Stomach (tissue), 19 donors: ENCODE measurements at regions of chr5 and their contacts with region 1.

Region 1: DNA sequence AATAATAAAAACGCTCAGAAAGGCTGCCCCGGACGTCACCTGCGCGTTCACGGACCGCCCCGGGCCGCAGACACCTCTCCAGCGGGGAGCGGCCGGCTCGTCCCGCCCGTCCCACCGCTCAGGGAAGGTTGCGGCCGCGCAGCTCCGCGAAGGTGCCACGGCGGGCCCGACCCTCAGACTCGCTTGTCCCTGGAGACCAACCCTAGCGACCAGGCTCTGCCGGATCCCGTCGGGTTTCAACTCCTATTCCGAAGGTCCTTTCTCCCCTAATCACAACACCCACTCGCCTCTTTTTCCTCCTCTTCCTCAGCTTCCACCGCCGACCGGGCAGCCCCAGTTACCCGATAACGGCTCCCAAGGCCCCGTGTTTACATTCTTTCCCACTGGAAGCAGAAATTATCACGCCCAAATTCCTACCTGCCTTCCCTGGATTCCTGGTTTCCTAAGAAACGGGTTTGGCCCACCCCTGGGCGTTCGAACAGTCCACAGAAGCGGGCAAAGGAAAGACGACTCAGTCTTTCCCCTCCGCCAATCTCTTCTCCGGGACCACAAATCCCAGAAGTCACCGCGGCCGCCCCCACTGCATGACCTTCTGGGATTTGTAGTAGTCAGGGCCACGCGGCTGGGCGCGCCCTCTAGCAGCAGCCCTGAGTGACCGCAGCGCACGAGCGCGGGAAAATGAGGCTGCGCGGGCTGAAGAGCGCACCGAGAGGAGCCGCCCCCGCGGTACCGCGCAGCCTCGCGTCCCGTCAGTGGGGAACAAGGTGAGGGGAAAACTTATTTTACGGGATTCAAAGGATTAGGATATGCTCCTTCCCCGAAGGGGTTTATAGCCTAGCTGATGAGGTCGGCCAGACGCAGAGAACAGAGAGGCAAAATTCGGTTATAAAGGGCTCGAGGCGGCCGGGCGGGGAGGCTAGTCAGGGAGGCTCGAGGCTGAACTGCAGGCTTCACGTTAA is at the start of gene TTC33:
- DNase-seq: peak; percentile 96 to 98
- H3K4me3 ChIP-seq: peak within 1 kb of the TSS; percentile 61 to 95 (median 78)
- H3K27ac ChIP-seq: peak within 1 kb of the TSS; percentile 85 to 97 (median 91)
- H3K4me1 ChIP-seq: peaks cover 13 to 29% (median 28%) of the 10 kb centered on the region in 4 donors
- H3K27me3 ChIP-seq: no peaks in the 10 kb centered on the region
- CTCF ChIP-seq: peak in 5 of 7 experiments; percentile 21 to 77 (median 68)
- EP300 ChIP-seq: no peak
- POLR2A ChIP-seq: no peak
- total RNA-seq, gene TTC33: 0.29 to 41.5 (median 7.5) TPM

Region 2: DNA sequence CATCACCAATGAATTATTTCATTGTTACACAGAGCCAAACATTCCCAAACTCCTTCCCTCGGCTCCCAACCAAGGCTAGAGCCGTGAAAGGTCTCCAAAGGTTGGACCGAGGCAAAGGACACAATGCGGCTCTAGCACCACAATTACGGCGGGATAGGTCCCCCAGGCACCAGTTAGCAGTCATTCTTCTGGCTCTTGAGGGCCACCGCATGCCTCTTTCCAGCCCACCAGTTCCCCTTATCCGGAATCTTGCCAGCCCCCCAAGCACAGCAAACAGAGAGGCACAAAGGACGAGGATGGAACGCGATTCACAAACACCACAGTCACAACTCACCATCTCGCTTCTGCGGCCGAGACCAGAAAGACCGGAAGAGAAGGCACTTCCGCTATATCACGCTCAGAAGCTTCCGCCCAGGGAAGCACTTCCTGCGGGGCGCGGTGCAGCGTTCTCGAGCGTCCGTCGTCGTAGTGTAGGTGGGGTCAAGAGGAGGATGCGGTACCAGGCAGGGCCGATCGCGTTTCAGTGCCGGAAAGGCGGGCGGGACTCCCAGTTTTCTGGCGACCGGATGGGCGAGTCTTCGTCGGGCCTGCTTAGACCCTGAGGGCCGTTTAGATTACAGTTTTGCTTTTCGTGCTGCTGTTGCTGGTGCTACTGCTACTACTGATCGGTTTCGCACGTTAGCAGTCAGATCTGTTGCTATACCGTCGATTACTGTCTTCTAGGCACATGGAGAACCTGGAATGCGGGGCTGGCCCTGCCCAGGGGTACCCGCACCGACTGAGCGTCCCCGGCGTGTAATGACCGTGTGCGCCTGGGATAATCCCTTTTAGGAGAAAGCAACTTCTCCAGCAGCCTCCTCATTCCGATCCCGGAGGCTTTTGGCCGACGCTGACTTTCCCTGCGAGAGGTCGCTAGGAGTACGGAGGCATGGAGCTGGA is 79.4 kb after region 1 on chr5 and contains the start of gene RPL37:
- intact Hi-C with region 1: loop called (anchors 10 kb)
- DNase-seq: peak; percentile 97 to 99
- H3K4me3 ChIP-seq: peak within 1 kb of the TSS; percentile 62 to 88 (median 75)
- H3K27ac ChIP-seq: peak within 1 kb of the TSS; percentile 90 to 99 (median 97)
- H3K4me1 ChIP-seq: peaks cover 12 to 42% (median 32%) of the 10 kb centered on the region in 4 donors
- H3K27me3 ChIP-seq: no peaks in the 10 kb centered on the region
- CTCF ChIP-seq: no peak
- EP300 ChIP-seq: peak; percentile 19
- POLR2A ChIP-seq: peak in 2 of 4 donors; percentile 51 to 60
- total RNA-seq, gene RPL37: 87.9 to 1,694 (median 446) TPM

Region 3: GRCh38 chr5:40879163-40879942 is 123.7 kb after region 1 on chr5:
- intact Hi-C with region 1: loop called (anchors 5 kb)
- DNase-seq: peak in 1 of 2 donors; percentile 37
- H3K4me3 ChIP-seq: no peak overlapping the region
- H3K27ac ChIP-seq: no peak overlapping the region
- H3K4me1 ChIP-seq: peaks cover 0 to 7% (median 3%) of the 10 kb centered on the region in 4 donors
- H3K27me3 ChIP-seq: no peaks in the 10 kb centered on the region
- CTCF ChIP-seq: peak in 5 of 7 experiments; percentile 29 to 69 (median 51)
- EP300 ChIP-seq: no peak
- POLR2A ChIP-seq: no peak

Region 4: GRCh38 chr5:40991168-40991980 is 235.7 kb after region 1 on chr5:
- intact Hi-C with region 1: no loop called
- DNase-seq: peak; percentile 52 to 68
- H3K4me3 ChIP-seq: no peak overlapping the region
- H3K27ac ChIP-seq: peak overlapping the region in 4 of 5 donors; percentile 42 to 74 (median 72)
- H3K4me1 ChIP-seq: peaks cover 13 to 31% (median 26%) of the 10 kb centered on the region in 4 donors
- H3K27me3 ChIP-seq: no peaks in the 10 kb centered on the region
- CTCF ChIP-seq: no peak
- EP300 ChIP-seq: peak; percentile 71
- POLR2A ChIP-seq: no peak